Sigmoid colon (tissue), 7 donors: ENCODE measurements at regions of chr22 and their contacts with region 1.

Region 1: GRCh38 chr22:44819971-44820631 is 67.7 kb downstream of the ARHGAP8 start:
- DNase-seq: peak; percentile 48
- H3K4me3 ChIP-seq: no peak overlapping the region
- H3K27ac ChIP-seq: no peak overlapping the region
- H3K4me1 ChIP-seq: no peaks in the 10 kb centered on the region
- H3K27me3 ChIP-seq: peaks cover 0 to 24% (median 10%) of the 10 kb centered on the region in 3 donors
- CTCF ChIP-seq: no peak
- EP300 ChIP-seq: no peak
- POLR2A ChIP-seq: no peak

Region 2: DNA sequence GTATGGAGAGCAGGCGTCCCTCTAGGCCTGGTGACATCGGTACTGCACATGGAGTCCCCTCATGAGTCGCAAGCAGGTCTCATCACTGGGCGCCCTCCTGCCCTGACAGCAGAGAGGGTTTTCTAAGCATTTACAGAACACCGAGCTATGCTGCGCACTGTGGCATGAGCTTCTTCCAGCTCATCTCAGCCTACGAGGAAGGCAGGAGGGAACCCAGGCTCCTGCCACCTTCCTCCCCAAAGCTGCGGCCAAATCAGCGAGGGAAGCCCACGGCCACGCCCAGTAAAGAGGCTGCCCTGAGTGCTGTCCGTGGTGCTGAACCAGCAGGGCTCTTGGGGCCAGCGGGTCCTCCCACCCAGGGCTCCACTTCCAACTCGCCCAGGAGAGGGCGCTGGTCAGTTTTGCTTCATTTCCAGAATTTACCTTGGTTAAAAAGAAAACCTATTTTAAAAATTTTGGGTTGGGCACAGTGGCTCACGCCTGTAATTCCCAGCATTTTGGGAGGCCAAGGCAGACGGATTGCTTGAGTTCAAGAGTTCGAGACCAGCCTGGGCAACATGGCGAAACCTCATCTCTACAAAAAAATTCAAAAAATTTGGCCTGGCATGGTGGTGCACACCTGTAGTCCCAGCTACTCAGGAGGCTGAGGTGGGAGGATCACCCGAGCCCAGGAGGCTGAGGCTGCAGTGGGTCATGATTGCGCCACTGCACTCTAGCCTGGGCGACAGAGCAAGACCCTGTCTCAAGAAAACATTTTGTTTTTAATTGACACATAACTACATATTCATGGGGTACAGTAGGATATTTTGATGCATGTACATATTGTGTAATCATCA is 155.5 kb after region 1 on chr22:
- intact Hi-C with region 1: no loop called
- DNase-seq: peak; percentile 70
- H3K4me3 ChIP-seq: no peak overlapping the region
- H3K27ac ChIP-seq: no peak overlapping the region
- H3K4me1 ChIP-seq: no peaks in the 10 kb centered on the region
- H3K27me3 ChIP-seq: peaks cover 0 to 26% (median 0%) of the 10 kb centered on the region in 3 donors
- CTCF ChIP-seq: peak in 2 of 4 experiments; percentile 26 to 32
- EP300 ChIP-seq: no peak
- POLR2A ChIP-seq: no peak

Region 3: GRCh38 chr22:45096256-45096907 is 276.3 kb after region 1 on chr22:
- intact Hi-C with region 1: loop called (anchors 5 kb)
- DNase-seq: no peak
- H3K4me3 ChIP-seq: no peak overlapping the region
- H3K27ac ChIP-seq: no peak overlapping the region
- H3K4me1 ChIP-seq: no peaks in the 10 kb centered on the region
- H3K27me3 ChIP-seq: peaks cover 0 to 53% (median 18%) of the 10 kb centered on the region in 3 donors
- CTCF ChIP-seq: peak; percentile 23 to 64 (median 46)
- EP300 ChIP-seq: no peak
- POLR2A ChIP-seq: no peak